ENCODE measurements at regions of chr1 and their contacts with region 1.

Region 1: DNA sequence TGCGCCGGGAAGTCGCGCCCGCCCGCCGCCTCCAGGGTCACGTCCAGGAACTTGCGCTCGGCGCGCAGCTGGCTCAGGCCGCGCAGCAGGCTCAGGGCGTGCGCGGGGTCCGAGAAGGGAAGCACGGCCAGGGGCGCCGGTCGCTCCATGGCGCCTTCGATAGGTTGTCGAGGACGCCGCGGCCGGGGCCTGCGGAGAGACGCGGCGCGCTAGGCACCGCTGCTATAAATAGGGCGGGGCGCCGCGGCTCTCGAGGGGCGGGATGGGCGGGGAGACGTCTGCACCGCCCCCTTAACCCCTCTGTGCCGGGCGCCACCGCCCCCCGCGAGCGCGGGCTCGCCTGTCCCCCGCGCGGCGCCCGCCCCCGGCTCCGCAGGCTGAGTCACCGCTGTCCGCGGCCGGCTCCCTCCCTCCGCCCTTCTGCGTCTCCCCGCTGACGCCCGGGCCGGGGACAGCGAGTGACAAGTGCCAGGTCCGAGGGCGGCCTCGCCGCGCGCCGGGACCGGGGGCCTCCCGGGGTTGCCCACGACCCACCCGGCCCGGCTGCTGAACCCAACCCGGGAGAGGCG is at the start of gene KLHL21:
- DNase-seq: peak; percentile 90
- ATAC-seq: peak; percentile 69
- H3K4me3 ChIP-seq: peak within 1 kb of the TSS; percentile 68 to 94 (median 82)
- H3K4me3 Mint-ChIP-seq: peak within 1 kb of the TSS; percentile 93
- H3K27ac ChIP-seq: peak within 1 kb of the TSS; percentile 94 to 95
- H3K27ac Mint-ChIP-seq: peak within 1 kb of the TSS; percentile 99
- H3K4me1 ChIP-seq: peaks cover 29 to 43% of the 10 kb centered on the region in 2 donors
- H3K4me1 Mint-ChIP-seq: peaks cover 38% of the 10 kb centered on the region
- H3K27me3 ChIP-seq: no peaks in the 10 kb centered on the region
- H3K27me3 Mint-ChIP-seq: no peaks in the 10 kb centered on the region
- CTCF ChIP-seq: no peak
- total RNA-seq, gene KLHL21: 29.9 and 31.0 TPM in 2 replicates

Region 2: GRCh38 chr1:6393400-6394187 is 209.2 kb before region 1 on chr1 and contains the start of gene ACOT7:
- CTCF ChIA-PET with region 1: no interaction called
- POLR2A ChIA-PET with region 1: interaction called, 10 read pairs
- intact Hi-C with region 1: no loop called
- DNase-seq: peak; percentile 94
- ATAC-seq: peak; percentile 90
- H3K4me3 ChIP-seq: peak within 1 kb of the TSS; percentile 51 to 80 (median 64)
- H3K4me3 Mint-ChIP-seq: peak within 1 kb of the TSS; percentile 92
- H3K27ac ChIP-seq: peak within 1 kb of the TSS; percentile 84
- H3K27ac Mint-ChIP-seq: peak within 1 kb of the TSS; percentile 97
- H3K4me1 ChIP-seq: peaks cover 15 to 20% of the 10 kb centered on the region in 2 donors
- H3K4me1 Mint-ChIP-seq: peaks cover 16% of the 10 kb centered on the region
- H3K27me3 ChIP-seq: peaks cover 0 to 15% (median 0%) of the 10 kb centered on the region in 4 experiments
- H3K27me3 Mint-ChIP-seq: no peaks in the 10 kb centered on the region
- CTCF ChIP-seq: no peak
- total RNA-seq, gene ACOT7: 4.0 and 4.2 TPM in 2 replicates

Region 3: DNA sequence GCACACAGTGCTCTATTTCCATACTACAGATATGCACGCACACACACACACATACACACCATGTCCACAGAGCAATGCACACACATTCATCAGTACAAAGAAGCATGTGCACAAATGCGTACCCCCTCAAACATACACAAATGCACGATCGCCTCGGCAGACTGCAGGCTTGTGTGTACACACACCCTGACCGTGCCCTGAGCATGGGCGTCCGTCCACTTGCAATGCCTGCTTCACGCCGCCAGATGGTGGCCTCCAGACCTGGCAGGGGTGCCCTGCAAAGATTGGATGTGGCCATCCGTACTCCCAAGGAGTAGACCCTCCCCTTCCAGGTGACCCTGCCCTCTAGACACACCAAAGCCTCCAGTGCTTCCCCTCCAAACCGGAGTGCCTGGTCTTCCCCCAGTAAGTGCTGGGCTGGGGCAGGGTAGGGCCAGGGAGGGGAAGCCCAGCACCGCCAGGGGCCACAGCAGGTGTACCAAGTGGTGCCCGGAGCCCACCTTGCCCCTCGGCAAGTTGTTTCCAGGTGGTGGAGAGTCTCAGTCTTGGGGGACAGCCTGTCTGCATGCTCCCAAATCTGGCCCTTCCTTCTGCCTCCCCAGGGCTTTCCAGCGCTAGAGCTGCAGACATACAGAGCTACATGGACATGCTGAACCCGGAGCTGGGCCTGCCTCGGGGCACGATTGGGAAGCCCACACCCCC is 157.5 kb before region 1 on chr1:
- CTCF ChIA-PET with region 1: no interaction called
- POLR2A ChIA-PET with region 1: no interaction called
- intact Hi-C with region 1: no loop called
- DNase-seq: no peak
- ATAC-seq: no peak
- H3K4me3 ChIP-seq: no peak overlapping the region
- H3K4me3 Mint-ChIP-seq: peak overlapping the region; percentile 27
- H3K27ac ChIP-seq: no peak overlapping the region
- H3K27ac Mint-ChIP-seq: no peak overlapping the region
- H3K4me1 ChIP-seq: peaks cover 15 to 22% of the 10 kb centered on the region in 2 donors
- H3K4me1 Mint-ChIP-seq: peaks cover 21% of the 10 kb centered on the region
- H3K27me3 ChIP-seq: peaks cover 0 to 61% (median 24%) of the 10 kb centered on the region in 4 experiments
- H3K27me3 Mint-ChIP-seq: peaks cover 41% of the 10 kb centered on the region
- CTCF ChIP-seq: peak; percentile 25

Region 4: DNA sequence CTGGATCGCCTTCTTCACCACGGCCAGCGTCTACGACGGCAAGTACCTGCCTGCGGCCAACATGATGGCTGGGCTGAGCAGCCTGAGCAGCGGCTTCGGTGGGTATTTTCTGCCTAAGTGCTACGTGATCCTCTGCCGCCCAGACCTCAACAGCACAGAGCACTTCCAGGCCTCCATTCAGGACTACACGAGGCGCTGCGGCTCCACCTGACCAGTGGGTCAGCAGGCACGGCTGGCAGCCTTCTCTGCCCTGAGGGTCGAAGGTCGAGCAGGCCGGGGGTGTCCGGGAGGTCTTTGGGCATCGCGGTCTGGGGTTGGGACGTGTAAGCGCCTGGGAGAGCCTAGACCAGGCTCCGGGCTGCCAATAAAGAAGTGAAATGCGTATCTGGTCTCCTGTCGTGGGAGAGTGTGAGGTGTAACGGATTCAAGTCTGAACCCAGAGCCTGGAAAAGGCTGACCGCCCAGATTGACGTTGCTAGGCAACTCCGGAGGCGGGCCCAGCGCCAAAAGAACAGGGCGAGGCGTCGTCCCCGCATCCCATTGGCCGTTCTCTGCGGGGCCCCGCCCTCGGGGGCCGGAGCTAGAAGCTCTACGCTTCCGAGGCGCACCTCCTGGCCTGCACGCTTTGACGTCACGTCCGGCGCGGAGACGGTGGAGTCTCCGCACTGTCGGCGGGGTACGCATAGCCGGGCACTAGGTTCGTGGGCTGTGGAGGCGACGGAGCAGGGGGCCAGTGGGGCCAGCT is 23.2 kb before region 1 on chr1 and contains the start of gene ZBTB48:
- CTCF ChIA-PET with region 1: interaction called, 9 read pairs
- POLR2A ChIA-PET with region 1: interaction called, 21 read pairs
- intact Hi-C with region 1: loop called (anchors 1 kb)
- DNase-seq: peak; percentile 97
- ATAC-seq: peak; percentile 97
- H3K4me3 ChIP-seq: peak within 1 kb of the TSS; percentile 30 to 91 (median 88)
- H3K4me3 Mint-ChIP-seq: peak within 1 kb of the TSS; percentile 98
- H3K27ac ChIP-seq: peak within 1 kb of the TSS; percentile 87 to 91
- H3K27ac Mint-ChIP-seq: peak within 1 kb of the TSS; percentile 98
- H3K4me1 ChIP-seq: peaks cover 20 to 32% of the 10 kb centered on the region in 2 donors
- H3K4me1 Mint-ChIP-seq: peaks cover 34% of the 10 kb centered on the region
- H3K27me3 ChIP-seq: no peaks in the 10 kb centered on the region
- H3K27me3 Mint-ChIP-seq: no peaks in the 10 kb centered on the region
- CTCF ChIP-seq: no peak
- total RNA-seq, gene ZBTB48: 65.6 and 79.0 TPM in 2 replicates

Region 5: GRCh38 chr1:6624710-6625583 is 22.2 kb after region 1 on chr1 and contains the start of gene THAP3:
- CTCF ChIA-PET with region 1: interaction called, 16 read pairs
- POLR2A ChIA-PET with region 1: interaction called, 8 read pairs
- intact Hi-C with region 1: loop called (anchors 1 kb)
- DNase-seq: peak; percentile 92
- ATAC-seq: peak; percentile 98
- H3K4me3 ChIP-seq: peak within 1 kb of the TSS; percentile 61 to 80 (median 62)
- H3K4me3 Mint-ChIP-seq: peak within 1 kb of the TSS; percentile 93
- H3K27ac ChIP-seq: peak within 1 kb of the TSS in 1 of 2 donors; percentile 27
- H3K27ac Mint-ChIP-seq: peak within 1 kb of the TSS; percentile 81
- H3K4me1 ChIP-seq: peaks cover 13 to 32% of the 10 kb centered on the region in 2 donors
- H3K4me1 Mint-ChIP-seq: peaks cover 31% of the 10 kb centered on the region
- H3K27me3 ChIP-seq: no peaks in the 10 kb centered on the region
- H3K27me3 Mint-ChIP-seq: no peaks in the 10 kb centered on the region
- CTCF ChIP-seq: peak; percentile 57
- total RNA-seq, gene THAP3: 24.6 and 30.4 TPM in 2 replicates

Region 6: GRCh38 chr1:6701437-6702153 is 98.8 kb after region 1 on chr1 and contains the start of gene DNAJC11:
- CTCF ChIA-PET with region 1: no interaction called
- POLR2A ChIA-PET with region 1: no interaction called
- intact Hi-C with region 1: loop called (anchors 1 kb)
- DNase-seq: peak; percentile 92
- ATAC-seq: peak; percentile 98
- H3K4me3 ChIP-seq: peak within 1 kb of the TSS; percentile 63 to 91 (median 79)
- H3K4me3 Mint-ChIP-seq: peak within 1 kb of the TSS; percentile 95
- H3K27ac ChIP-seq: peak within 1 kb of the TSS in 1 of 2 donors; percentile 91
- H3K27ac Mint-ChIP-seq: peak within 1 kb of the TSS; percentile 96
- H3K4me1 ChIP-seq: peaks cover 8 to 17% of the 10 kb centered on the region in 2 donors
- H3K4me1 Mint-ChIP-seq: peaks cover 22% of the 10 kb centered on the region
- H3K27me3 ChIP-seq: no peaks in the 10 kb centered on the region
- H3K27me3 Mint-ChIP-seq: no peaks in the 10 kb centered on the region
- CTCF ChIP-seq: peak; percentile 95
- total RNA-seq, gene DNAJC11: 51.6 and 57.2 TPM in 2 replicates